Right cardiac atrium (tissue), 5 donors: ENCODE measurements at regions of chr1 and their contacts with region 1.

Region 1: DNA sequence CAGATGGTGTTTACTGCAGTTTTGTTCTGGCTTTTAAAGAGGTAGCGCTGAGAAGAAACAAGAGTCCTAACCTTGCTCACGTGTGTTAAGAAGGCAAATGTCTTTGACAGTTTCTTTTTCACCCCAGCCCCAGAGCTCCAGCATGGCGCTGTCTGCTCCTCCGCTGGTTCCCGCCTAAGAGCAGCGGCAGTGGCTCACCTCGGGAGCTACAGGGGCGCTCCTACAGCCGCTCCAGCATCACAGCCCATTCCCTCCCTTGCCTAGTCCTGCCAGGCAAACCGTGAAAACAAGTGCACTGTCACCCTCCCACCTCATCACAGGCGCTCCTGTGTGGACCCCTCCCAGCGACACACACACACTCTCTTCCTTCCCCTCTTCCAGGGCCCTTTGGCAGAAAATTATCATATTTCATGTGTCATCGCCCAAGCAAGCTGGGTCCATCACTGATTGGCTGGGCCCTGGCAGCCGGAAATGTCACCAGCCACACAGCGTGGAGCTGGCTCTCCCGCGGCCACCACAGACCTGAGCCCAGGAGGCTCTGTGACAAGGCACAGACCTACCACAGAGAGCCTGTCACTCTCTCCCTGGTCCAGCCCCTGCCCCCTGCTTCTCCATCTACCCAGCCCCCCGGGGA is 1.2 kb upstream of the HIVEP3 start:
- DNase-seq: peak; percentile 66 to 87 (median 86)
- ATAC-seq: peak; percentile 81 to 84
- H3K4me3 ChIP-seq: peak overlapping the region; percentile 19
- H3K27ac ChIP-seq: no peak overlapping the region
- H3K4me1 ChIP-seq: peaks cover 8% of the 10 kb centered on the region
- H3K27me3 ChIP-seq: no peaks in the 10 kb centered on the region

Region 2: GRCh38 chr1:41830726-41831125 is 89.2 kb before region 1 on chr1:
- intact Hi-C with region 1: loop called in 1 of 4 experiments (anchors 10 kb)
- DNase-seq: no peak
- ATAC-seq: peak in 1 of 2 donors; percentile 44
- H3K4me3 ChIP-seq: no peak overlapping the region
- H3K27ac ChIP-seq: no peak overlapping the region
- H3K4me1 ChIP-seq: peaks cover 5% of the 10 kb centered on the region
- H3K27me3 ChIP-seq: no peaks in the 10 kb centered on the region

Region 3: DNA sequence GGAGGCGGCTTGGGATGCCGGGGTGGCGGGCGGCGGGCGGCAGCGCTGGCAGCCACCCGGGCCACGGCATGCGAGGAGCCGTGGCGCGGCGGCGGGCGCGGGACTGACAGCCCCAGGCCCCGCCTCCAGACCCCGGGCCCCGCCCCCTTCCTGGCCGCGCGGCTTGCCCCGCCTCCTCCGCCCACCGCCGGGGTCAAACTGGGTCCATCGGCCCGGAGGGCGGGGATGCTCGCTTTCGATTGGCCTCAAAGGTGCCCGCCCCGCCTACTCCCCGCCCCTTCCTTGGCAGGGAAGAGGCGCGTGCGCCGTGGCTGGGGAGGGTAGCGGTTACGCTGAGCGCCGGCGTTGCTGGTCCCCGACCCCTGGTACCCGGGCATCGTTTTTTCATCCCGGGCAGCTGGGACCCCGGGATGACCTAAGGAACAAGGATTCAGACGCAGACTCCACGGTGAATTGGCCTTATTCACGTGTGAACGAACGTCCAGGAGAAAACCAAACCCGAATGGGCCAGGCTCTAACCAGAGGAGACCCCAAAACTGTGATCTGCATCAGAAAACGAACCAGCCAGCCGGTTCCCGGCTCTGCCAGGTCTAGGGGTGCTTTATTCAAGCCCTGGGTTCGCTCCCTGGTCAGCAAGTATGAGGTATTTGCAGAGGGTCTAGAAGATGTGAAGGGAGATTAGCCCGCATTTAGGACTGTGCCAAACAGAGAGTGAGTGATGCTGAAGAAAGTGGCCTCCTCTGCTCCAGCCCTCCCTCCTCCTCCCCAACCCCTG is 116.1 kb after region 1 on chr1:
- intact Hi-C with region 1: loop called in 1 of 4 experiments (anchors 10 kb)
- DNase-seq: peak; percentile 98 to 99 (median 99)
- ATAC-seq: peak; percentile 98
- H3K4me3 ChIP-seq: peak overlapping the region; percentile 81
- H3K27ac ChIP-seq: peak overlapping the region; percentile 15
- H3K4me1 ChIP-seq: no peaks in the 10 kb centered on the region
- H3K27me3 ChIP-seq: no peaks in the 10 kb centered on the region